Endothelial cell of umbilical vein (primary cell): ENCODE measurements at regions of chr17 and their contacts with region 1.

Region 1: GRCh38 chr17:7915611-7916382 is at the start of gene RNF227:
- DNase-seq: peak; percentile 98
- H3K4me3 ChIP-seq: peak within 1 kb of the TSS in 2 of 3 experiments; percentile 24 to 44
- H3K27ac ChIP-seq: peak within 1 kb of the TSS; percentile 19
- H3K4me1 ChIP-seq: peaks cover 16% of the 10 kb centered on the region
- H3K27me3 ChIP-seq: no peaks in the 10 kb centered on the region
- CTCF ChIP-seq: no peak
- POLR2A ChIP-seq: no peak
- total RNA-seq, gene RNF227: 0.58 TPM in 2 replicates

Region 2: DNA sequence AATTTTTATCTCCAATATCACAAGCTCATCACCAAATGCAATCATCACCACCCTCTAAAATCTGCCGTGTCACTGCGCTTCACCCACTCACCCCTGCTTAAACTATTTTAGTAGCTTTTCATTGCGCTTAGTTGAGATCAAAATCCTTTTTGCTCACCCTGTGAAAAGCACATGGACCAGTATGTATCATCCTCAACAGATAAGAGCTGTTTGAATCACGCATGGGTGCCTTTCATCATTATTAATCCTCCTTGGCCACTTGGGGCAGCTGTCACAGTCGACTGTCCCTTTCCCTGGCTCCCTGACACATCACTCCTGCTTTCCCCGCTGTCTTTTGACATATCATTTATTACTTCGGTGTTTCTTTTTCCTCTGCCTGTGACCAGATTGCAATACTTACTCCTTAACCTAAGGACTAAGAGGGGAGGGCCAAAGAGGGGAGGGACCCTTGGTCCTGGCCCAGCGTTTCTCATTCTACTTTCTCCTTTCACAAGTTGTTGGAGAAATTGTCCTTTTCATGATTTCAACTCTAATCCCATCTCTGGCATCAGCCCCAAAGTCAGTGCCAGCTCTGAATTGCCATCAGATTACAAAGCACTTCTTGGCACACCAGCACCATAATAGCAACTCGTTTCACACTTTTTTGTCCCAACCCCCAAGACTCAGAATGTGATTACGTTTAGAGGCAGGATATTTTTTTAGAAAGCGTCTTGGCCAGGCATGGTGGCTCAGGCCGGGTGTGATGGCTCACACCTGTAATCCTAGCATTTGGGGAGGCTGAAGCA is 90.4 kb before region 1 on chr17:
- CTCF ChIA-PET with region 1: interaction called, 3 read pairs
- POLR2A ChIA-PET with region 1: no interaction called
- dilution Hi-C with region 1: no loop called
- intact Hi-C with region 1: loop called (anchors 2 kb)
- DNase-seq: no peak
- H3K4me3 ChIP-seq: no peak overlapping the region
- H3K27ac ChIP-seq: no peak overlapping the region
- H3K4me1 ChIP-seq: no peaks in the 10 kb centered on the region
- H3K27me3 ChIP-seq: peaks cover 0 to 6% of the 10 kb centered on the region in 2 experiments
- CTCF ChIP-seq: peak in 1 of 2 donors; percentile 4
- POLR2A ChIP-seq: no peak

Region 3: GRCh38 chr17:7931709-7932482 is 16.1 kb after region 1 on chr17 and contains the starts of genes CNTROB and TRAPPC1:
- CTCF ChIA-PET with region 1: interaction called, 15 read pairs
- POLR2A ChIA-PET with region 1: no interaction called
- dilution Hi-C with region 1: no loop called
- intact Hi-C with region 1: no loop called
- DNase-seq: peak; percentile 99
- H3K4me3 ChIP-seq: peak within 1 kb of the TSS; percentile 74 to 98 (median 96)
- H3K27ac ChIP-seq: peak within 1 kb of the TSS; percentile 66
- H3K4me1 ChIP-seq: peaks cover 23% of the 10 kb centered on the region
- H3K27me3 ChIP-seq: no peaks in the 10 kb centered on the region
- CTCF ChIP-seq: no peak
- POLR2A ChIP-seq: no peak
- total RNA-seq, gene CNTROB: 45.0 and 47.2 TPM in 2 replicates
- total RNA-seq, gene TRAPPC1: 139 and 146 TPM in 2 replicates